ENCODE measurements at regions of chr1 and their contacts with region 1.

Region 1: DNA sequence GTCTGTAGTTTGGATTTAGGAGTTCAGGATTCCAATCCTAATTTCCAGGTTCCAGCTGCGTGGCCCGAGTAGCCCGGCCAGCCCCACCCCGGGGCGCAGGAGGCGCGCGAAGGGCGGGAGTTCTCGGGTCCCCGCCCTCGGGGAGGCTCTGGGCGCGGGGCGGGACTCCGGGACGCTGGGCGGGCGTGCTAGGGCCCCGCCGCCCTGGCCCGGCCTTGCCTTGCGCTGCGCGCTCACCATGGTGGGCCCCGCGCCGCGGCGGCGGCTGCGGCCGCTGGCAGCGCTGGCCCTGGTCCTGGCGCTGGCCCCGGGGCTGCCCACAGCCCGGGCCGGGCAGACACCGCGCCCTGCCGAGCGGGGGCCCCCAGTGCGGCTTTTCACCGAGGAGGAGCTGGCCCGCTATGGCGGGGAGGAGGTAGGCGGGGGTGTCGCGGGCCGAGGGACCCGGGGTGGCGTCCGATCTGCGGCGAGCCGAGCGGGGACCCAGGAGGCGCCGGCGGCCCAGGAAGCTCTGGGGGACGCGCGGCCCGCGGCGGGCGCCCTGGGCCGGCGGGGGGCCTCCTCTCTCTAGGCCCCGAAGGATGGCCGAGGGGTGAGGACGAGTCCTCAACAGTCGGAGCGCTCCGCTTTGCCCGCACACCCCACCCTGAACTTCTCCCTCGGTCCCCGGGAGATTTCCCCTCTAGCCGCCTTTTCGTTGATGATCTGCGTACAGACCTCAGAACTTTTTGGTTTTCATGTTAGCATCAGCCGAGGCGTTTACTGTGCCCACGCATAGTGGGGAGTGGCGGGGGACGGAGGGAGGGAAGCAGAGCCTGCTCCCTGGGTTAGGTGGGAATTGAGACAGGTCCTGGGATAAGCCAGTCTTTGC is at the start of gene NENF:
- DNase-seq: peak; percentile 39 to 86 (median 70)
- ATAC-seq: peak; percentile 99
- H3K4me3 ChIP-seq: peak within 1 kb of the TSS; percentile 69
- H3K4me3 Mint-ChIP-seq: peak within 1 kb of the TSS; percentile 87
- H3K27ac ChIP-seq: no peak within 1 kb of the TSS
- H3K27ac Mint-ChIP-seq: peak within 1 kb of the TSS; percentile 65
- H3K4me1 ChIP-seq: peaks cover 20% of the 10 kb centered on the region
- H3K4me1 Mint-ChIP-seq: peaks cover 24% of the 10 kb centered on the region
- H3K27me3 ChIP-seq: no peaks in the 10 kb centered on the region
- H3K27me3 Mint-ChIP-seq: no peaks in the 10 kb centered on the region
- CTCF ChIP-seq: no peak
- total RNA-seq, gene NENF: 21.2 to 22.4 TPM

Region 2: GRCh38 chr1:212269306-212269705 is 163.6 kb before region 1 on chr1:
- CTCF ChIA-PET with region 1: no interaction called
- POLR2A ChIA-PET with region 1: no interaction called
- intact Hi-C with region 1: no loop called
- DNase-seq: no peak
- ATAC-seq: no peak
- H3K4me3 ChIP-seq: no peak overlapping the region
- H3K4me3 Mint-ChIP-seq: no peak overlapping the region
- H3K27ac ChIP-seq: no peak overlapping the region
- H3K27ac Mint-ChIP-seq: no peak overlapping the region
- H3K4me1 ChIP-seq: no peaks in the 10 kb centered on the region
- H3K4me1 Mint-ChIP-seq: no peaks in the 10 kb centered on the region
- H3K27me3 ChIP-seq: no peaks in the 10 kb centered on the region
- H3K27me3 Mint-ChIP-seq: no peaks in the 10 kb centered on the region
- CTCF ChIP-seq: no peak

Region 3: DNA sequence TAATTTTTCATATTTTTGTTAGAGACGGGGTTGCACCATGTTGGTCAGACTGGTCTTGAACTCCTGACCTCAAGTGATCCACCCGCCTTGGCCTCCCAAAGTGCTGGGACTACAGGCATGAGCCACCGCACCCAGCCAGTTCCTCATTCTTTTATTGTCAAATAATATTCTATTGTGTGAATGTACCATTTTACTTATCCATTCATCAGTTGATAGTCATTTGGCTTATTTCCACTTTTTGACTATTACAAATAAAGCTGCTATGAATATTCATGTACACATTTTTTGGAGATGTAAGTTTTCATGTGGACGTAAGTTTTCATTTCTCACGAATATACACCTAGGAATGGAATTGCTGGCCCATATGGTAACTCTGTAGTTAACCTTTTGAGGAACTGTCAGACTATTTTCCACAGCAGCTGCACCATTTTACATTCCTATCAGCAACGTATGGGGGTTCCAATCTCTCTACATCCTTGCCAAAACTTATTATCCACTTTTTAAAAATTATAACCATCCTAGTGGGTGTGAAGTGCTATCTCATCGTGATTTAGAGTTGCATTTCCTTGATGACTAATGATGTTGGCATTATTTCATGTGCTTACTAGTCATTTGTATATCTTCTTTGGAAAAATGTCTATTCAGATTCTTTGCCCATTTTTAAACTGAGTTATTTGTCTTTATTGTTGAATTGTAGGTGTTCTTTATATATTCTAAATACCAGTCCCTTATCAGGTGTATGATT is 30.9 kb before region 1 on chr1:
- CTCF ChIA-PET with region 1: no interaction called
- POLR2A ChIA-PET with region 1: no interaction called
- intact Hi-C with region 1: no loop called
- DNase-seq: no peak
- ATAC-seq: no peak
- H3K4me3 ChIP-seq: no peak overlapping the region
- H3K4me3 Mint-ChIP-seq: no peak overlapping the region
- H3K27ac ChIP-seq: no peak overlapping the region
- H3K27ac Mint-ChIP-seq: no peak overlapping the region
- H3K4me1 ChIP-seq: no peaks in the 10 kb centered on the region
- H3K4me1 Mint-ChIP-seq: peaks cover 5% of the 10 kb centered on the region
- H3K27me3 ChIP-seq: no peaks in the 10 kb centered on the region
- H3K27me3 Mint-ChIP-seq: no peaks in the 10 kb centered on the region
- CTCF ChIP-seq: no peak

Region 4: GRCh38 chr1:212414328-212415106 is 18.4 kb before region 1 on chr1 and contains the start of gene PACC1:
- CTCF ChIA-PET with region 1: interaction called, 4 read pairs
- POLR2A ChIA-PET with region 1: interaction called, 4 read pairs
- intact Hi-C with region 1: loop called in 1 of 2 experiments (anchors 1 kb)
- DNase-seq: peak; percentile 70 to 95 (median 81)
- ATAC-seq: peak; percentile 85
- H3K4me3 ChIP-seq: peak within 1 kb of the TSS; percentile 76
- H3K4me3 Mint-ChIP-seq: peak within 1 kb of the TSS; percentile 89
- H3K27ac ChIP-seq: peak within 1 kb of the TSS; percentile 40 to 72
- H3K27ac Mint-ChIP-seq: peak within 1 kb of the TSS; percentile 82
- H3K4me1 ChIP-seq: peaks cover 30% of the 10 kb centered on the region
- H3K4me1 Mint-ChIP-seq: peaks cover 22% of the 10 kb centered on the region
- H3K27me3 ChIP-seq: no peaks in the 10 kb centered on the region
- H3K27me3 Mint-ChIP-seq: no peaks in the 10 kb centered on the region
- CTCF ChIP-seq: no peak
- total RNA-seq, gene PACC1: 1.8 to 2.1 TPM

Region 5: DNA sequence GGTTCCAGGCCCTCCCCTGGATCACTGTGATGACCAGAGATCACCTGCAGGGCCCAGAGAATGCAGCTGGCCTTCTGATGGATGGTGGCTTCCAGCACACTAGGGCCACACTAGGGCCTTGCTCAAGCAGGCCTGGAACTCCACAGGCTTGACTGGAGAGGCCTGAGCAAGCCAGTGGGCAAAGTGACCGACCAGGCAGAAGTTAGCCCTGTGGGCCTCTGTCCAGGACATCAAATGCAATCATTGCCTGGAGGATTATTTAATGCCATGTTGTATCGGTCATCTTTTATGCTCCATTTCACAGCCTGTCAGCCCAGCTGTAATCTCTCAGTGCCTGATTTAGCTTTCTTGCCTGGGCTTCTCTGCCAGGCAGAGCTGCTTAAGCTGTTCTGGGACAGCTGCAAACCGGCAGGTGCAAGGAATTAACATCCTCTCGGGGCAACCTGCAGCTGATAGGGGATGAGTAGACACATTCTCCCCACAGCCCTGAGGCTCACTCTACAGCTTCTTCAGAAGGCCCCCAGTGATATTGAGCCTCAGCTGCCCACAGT is 17.5 kb after region 1 on chr1:
- CTCF ChIA-PET with region 1: no interaction called
- POLR2A ChIA-PET with region 1: no interaction called
- intact Hi-C with region 1: no loop called
- DNase-seq: no peak
- ATAC-seq: no peak
- H3K4me3 ChIP-seq: no peak overlapping the region
- H3K4me3 Mint-ChIP-seq: no peak overlapping the region
- H3K27ac ChIP-seq: no peak overlapping the region
- H3K27ac Mint-ChIP-seq: no peak overlapping the region
- H3K4me1 ChIP-seq: no peaks in the 10 kb centered on the region
- H3K4me1 Mint-ChIP-seq: no peaks in the 10 kb centered on the region
- H3K27me3 ChIP-seq: no peaks in the 10 kb centered on the region
- H3K27me3 Mint-ChIP-seq: no peaks in the 10 kb centered on the region
- CTCF ChIP-seq: no peak

Region 6: DNA sequence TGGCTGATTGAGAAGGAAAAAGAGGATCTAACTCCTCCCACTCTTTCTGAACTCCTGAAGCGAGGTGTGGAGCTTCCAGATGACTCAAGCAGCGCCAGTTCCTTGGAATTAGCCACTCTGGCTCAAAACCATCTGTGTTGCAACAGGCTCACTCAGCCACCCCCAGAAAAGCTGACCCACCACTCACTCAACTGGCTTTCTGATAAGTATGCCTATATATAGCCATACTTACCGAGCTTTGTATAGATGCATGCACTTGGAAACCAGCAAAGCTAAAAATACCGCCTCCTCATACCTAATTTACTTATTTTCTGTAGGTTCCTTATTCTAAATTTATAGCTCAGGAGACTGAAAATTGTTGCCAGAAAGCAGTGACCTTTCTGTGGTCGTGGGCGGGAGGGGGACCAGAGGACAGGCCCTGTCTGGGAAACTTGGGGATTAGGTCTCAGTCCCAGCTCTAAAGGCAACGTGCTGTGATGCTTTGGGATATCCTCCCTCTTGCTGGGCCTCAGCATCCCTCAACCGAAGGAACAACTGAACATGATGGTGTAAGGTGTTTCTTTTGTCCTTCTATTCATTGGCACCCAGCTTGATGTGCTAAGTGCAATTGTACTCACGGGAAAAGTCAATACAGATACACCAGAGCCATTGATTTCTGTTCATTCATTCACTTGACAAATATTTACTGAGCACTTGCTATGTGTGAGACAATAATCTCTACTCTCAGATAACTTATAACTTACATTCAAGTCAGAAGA is 65.5 kb after region 1 on chr1:
- CTCF ChIA-PET with region 1: no interaction called
- POLR2A ChIA-PET with region 1: no interaction called
- intact Hi-C with region 1: no loop called
- DNase-seq: no peak
- ATAC-seq: no peak
- H3K4me3 ChIP-seq: no peak overlapping the region
- H3K4me3 Mint-ChIP-seq: no peak overlapping the region
- H3K27ac ChIP-seq: no peak overlapping the region
- H3K27ac Mint-ChIP-seq: no peak overlapping the region
- H3K4me1 ChIP-seq: no peaks in the 10 kb centered on the region
- H3K4me1 Mint-ChIP-seq: no peaks in the 10 kb centered on the region
- H3K27me3 ChIP-seq: no peaks in the 10 kb centered on the region
- H3K27me3 Mint-ChIP-seq: no peaks in the 10 kb centered on the region
- CTCF ChIP-seq: no peak

Measured in CD4-positive, alpha-beta T cell (primary cell).